Common myeloid progenitor, CD34-positive (primary cell): ENCODE measurements at regions of chr7 and their contacts with region 1.

Region 1: GRCh38 chr7:36264123-36264801 is 111.2 kb downstream of the EEPD1 start:
- DNase-seq: peak in 2 of 3 donors; percentile 56 to 61
- H3K4me3 ChIP-seq: no peak overlapping the region
- H3K27ac ChIP-seq: peak overlapping the region in 1 of 2 experiments; percentile 17
- H3K4me1 ChIP-seq: peaks cover 31 to 55% (median 43%) of the 10 kb centered on the region in 4 experiments
- H3K27me3 ChIP-seq: no peaks in the 10 kb centered on the region

Region 2: GRCh38 chr7:36238138-36238537 is 26.1 kb before region 1 on chr7:
- CTCF ChIA-PET with region 1: no interaction called
- POLR2A ChIA-PET with region 1: no interaction called
- DNase-seq: no peak
- H3K4me3 ChIP-seq: no peak overlapping the region
- H3K27ac ChIP-seq: no peak overlapping the region
- H3K4me1 ChIP-seq: no peaks in the 10 kb centered on the region
- H3K27me3 ChIP-seq: no peaks in the 10 kb centered on the region

Region 3: GRCh38 chr7:36278620-36279172 is 14.4 kb after region 1 on chr7:
- CTCF ChIA-PET with region 1: interaction called, 13 read pairs
- POLR2A ChIA-PET with region 1: no interaction called
- DNase-seq: no peak
- H3K4me3 ChIP-seq: no peak overlapping the region
- H3K27ac ChIP-seq: no peak overlapping the region
- H3K4me1 ChIP-seq: peaks cover 5 to 43% (median 24%) of the 10 kb centered on the region in 4 experiments
- H3K27me3 ChIP-seq: no peaks in the 10 kb centered on the region

Region 4: DNA sequence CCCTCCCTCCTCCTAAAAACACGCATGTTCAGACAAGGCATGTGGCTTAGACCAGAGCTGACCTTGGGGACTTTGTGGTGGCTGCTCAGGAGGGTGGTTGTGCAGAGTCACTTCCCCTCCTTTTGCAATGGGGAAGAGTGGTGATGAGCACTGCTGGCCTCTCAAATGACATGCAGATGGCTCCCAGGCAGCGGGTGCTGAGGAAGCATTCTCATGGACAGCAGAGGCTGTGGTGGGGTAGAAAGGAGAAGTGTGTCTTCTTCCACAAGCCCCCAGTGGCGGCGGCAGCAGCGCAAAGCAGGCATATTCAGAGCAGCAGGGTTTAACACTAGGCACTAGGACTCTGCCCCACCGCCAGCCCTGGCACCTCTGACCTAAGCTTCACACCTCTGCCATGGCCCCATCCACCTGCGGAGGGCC is 19.5 kb after region 1 on chr7:
- CTCF ChIA-PET with region 1: interaction called, 13 read pairs
- POLR2A ChIA-PET with region 1: no interaction called
- DNase-seq: peak; percentile 90 to 99 (median 99)
- H3K4me3 ChIP-seq: peak overlapping the region in 3 of 7 experiments; percentile 12 to 31 (median 12)
- H3K27ac ChIP-seq: peak overlapping the region; percentile 26 to 49
- H3K4me1 ChIP-seq: peaks cover 12 to 83% (median 64%) of the 10 kb centered on the region in 4 experiments
- H3K27me3 ChIP-seq: no peaks in the 10 kb centered on the region